ENCODE measurements at regions of chr6 and their contacts with region 1.

Region 1: GRCh38 chr6:79672631-79673111 is 41.5 kb downstream of the SH3BGRL2 start:
- DNase-seq: peak; percentile 23
- H3K4me3 Mint-ChIP-seq: peak overlapping the region; percentile 11
- H3K27ac Mint-ChIP-seq: peak overlapping the region; percentile 97
- H3K4me1 Mint-ChIP-seq: peaks cover 80% of the 10 kb centered on the region
- H3K27me3 Mint-ChIP-seq: no peaks in the 10 kb centered on the region
- CTCF ChIP-seq: peak; percentile 66

Region 2: GRCh38 chr6:79078075-79079025 is 594.3 kb before region 1 on chr6 and contains the start of gene PHIP:
- CTCF ChIA-PET with region 1: no interaction called
- intact Hi-C with region 1: loop called (anchors 10 kb)
- DNase-seq: peak; percentile 92
- H3K4me3 Mint-ChIP-seq: peak within 1 kb of the TSS; percentile 92
- H3K27ac Mint-ChIP-seq: peak within 1 kb of the TSS; percentile 92
- H3K4me1 Mint-ChIP-seq: no peaks in the 10 kb centered on the region
- H3K27me3 Mint-ChIP-seq: no peaks in the 10 kb centered on the region
- CTCF ChIP-seq: no peak
- total RNA-seq, gene PHIP: 43.3 and 50.8 TPM in 2 replicates

Region 3: DNA sequence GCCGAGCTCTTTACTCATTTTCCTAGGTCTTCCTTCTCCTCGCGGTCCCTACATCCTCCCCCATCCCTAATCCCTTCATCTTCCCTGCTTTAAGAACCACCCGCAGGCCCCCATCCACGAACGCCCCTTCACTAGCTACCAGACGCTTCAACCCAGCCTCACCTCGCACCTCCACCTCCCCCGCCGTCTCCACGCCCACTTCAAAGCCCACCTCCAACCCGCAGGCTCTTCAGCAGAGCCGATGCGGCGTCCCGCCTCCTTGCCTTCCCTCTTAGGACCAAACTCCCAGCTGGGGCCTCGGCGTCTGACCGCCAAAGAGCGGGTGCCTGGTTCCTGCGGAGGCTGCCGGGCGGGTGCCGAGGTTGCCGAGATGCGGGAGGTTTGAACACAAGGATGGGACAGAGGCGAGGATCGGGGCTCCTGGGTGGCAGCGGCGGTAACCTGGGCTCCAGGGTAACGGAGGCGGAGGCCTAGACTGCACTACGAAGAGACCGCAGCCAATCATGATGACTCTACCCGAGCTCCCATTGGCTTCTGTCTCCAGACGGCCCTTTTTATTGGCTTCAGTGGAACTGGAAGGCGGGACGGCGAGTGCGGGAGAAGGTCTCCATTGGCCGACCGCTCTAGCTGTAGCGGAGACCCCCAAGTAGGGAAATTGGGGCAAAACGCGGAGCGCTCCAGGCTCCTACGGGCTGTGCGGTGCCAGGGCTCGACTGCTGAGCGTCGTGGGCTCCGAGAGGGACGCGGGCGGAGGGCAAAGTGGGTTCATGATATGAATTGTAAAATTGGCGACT is 135.5 kb before region 1 on chr6 and contains the start of gene LCA5:
- CTCF ChIA-PET with region 1: no interaction called
- intact Hi-C with region 1: loop called (anchors 5 kb)
- DNase-seq: peak; percentile 92
- H3K4me3 Mint-ChIP-seq: no peak within 1 kb of the TSS
- H3K27ac Mint-ChIP-seq: no peak within 1 kb of the TSS
- H3K4me1 Mint-ChIP-seq: peaks cover 45% of the 10 kb centered on the region
- H3K27me3 Mint-ChIP-seq: no peaks in the 10 kb centered on the region
- CTCF ChIP-seq: no peak
- total RNA-seq, gene LCA5: 13.9 and 18.3 TPM in 2 replicates

Region 4: DNA sequence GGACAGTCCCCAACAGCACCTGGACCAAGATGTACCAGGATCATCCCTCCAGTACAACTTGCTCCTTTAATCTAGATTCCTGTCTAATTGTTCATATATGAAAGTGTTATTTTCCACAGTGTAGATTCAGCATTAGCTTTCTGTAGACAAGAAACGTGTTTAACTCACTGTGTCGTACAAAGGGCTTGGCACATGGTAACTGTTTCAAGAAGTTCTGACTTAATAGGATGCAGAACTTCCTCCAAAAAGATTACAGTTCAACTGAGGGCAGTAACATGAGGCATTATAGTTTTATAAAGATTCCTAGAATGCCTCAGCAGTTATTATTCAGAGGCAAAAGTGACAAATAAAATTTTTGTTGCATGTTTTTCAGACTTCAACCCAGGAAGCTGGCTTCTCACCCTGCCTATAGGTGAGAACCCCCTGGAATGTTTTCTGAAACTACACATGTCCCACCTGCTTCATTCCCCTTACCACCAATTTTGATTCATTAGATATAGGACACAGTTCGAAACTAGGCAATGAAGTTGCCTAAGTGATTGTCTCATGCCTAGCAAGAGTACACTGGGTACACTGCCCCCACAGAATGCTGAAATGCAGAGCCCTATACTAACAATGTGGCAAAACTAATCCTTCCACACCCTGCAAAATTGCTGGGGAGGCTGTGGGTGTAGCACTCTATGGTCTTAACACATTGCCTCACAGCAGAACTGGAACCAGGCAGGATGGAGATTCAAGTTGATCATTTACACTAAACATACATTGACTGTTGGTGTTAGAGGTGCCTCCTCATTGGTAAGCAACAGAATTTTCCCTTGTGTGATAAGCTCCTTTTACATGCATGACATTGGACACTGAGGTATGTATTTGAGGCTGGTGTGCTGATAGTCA is 64.1 kb before region 1 on chr6:
- CTCF ChIA-PET with region 1: no interaction called
- intact Hi-C with region 1: loop called (anchors 2 kb)
- DNase-seq: peak; percentile 75
- H3K4me3 Mint-ChIP-seq: no peak overlapping the region
- H3K27ac Mint-ChIP-seq: peak overlapping the region; percentile 56
- H3K4me1 Mint-ChIP-seq: peaks cover 76% of the 10 kb centered on the region
- H3K27me3 Mint-ChIP-seq: no peaks in the 10 kb centered on the region
- CTCF ChIP-seq: no peak

Region 5: DNA sequence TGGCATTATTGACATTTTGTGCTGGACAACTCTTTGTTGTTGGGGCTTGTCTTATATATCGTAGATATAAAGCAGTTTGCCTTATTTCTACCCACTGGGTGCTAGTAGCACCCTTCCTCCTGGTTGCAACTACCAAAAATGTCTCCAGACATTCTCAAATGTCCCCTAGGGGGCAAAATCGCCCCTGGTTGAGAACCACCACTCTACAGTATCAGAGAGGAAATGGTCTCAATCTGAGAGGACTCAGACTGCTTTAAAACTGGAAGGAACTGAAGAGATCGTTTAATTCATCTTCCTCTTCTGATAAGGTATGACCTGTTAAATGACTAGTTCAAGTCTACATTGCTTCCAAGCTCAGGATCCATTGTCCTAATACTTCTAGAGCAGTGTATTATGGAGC is 26.7 kb before region 1 on chr6:
- CTCF ChIA-PET with region 1: interaction called, 10 read pairs
- intact Hi-C with region 1: no loop called
- DNase-seq: no peak
- H3K4me3 Mint-ChIP-seq: no peak overlapping the region
- H3K27ac Mint-ChIP-seq: no peak overlapping the region
- H3K4me1 Mint-ChIP-seq: peaks cover 70% of the 10 kb centered on the region
- H3K27me3 Mint-ChIP-seq: no peaks in the 10 kb centered on the region
- CTCF ChIP-seq: peak; percentile 14

Region 6: DNA sequence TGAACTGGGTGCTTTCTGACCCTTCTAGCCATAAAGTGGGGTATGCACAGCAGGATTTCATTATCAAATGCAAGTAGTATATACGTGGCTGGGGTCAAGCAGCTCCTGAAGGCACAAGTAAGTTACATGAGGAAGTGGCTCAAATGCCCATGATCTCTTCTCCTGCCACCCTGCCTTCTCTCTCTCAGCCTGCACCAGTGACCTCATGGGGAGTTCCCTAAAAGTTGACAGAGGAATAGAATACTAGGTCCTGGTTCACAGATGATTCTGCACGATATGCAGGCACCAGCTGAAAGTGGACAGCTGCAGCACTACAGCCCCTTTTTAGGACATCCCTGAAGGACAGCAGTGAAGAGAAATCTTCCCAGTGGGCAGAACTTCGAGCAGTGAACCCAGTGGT is 715.8 kb after region 1 on chr6:
- CTCF ChIA-PET with region 1: no interaction called
- intact Hi-C with region 1: no loop called
- DNase-seq: no peak
- H3K4me3 Mint-ChIP-seq: no peak overlapping the region
- H3K27ac Mint-ChIP-seq: no peak overlapping the region
- H3K4me1 Mint-ChIP-seq: no peaks in the 10 kb centered on the region
- H3K27me3 Mint-ChIP-seq: no peaks in the 10 kb centered on the region
- CTCF ChIP-seq: no peak